ENCODE measurements at regions of chr7 and their contacts with region 1.

Region 1: GRCh38 chr7:44477063-44477830 is 13.2 kb downstream of the NUDCD3 start:
- DNase-seq: peak in 4 of 5 donors; percentile 38 to 62 (median 41)
- ATAC-seq: peak; percentile 86 to 89 (median 88)
- H3K4me3 ChIP-seq: no peak overlapping the region
- H3K27ac ChIP-seq: peak overlapping the region in 11 of 12 donors; percentile 19 to 68 (median 39)
- H3K4me1 ChIP-seq: peaks cover 6 to 62% (median 23%) of the 10 kb centered on the region in 12 donors
- H3K27me3 ChIP-seq: no peaks in the 10 kb centered on the region
- CTCF ChIP-seq: peak; percentile 77 to 94 (median 89)
- POLR2A ChIP-seq: no peak

Region 2: DNA sequence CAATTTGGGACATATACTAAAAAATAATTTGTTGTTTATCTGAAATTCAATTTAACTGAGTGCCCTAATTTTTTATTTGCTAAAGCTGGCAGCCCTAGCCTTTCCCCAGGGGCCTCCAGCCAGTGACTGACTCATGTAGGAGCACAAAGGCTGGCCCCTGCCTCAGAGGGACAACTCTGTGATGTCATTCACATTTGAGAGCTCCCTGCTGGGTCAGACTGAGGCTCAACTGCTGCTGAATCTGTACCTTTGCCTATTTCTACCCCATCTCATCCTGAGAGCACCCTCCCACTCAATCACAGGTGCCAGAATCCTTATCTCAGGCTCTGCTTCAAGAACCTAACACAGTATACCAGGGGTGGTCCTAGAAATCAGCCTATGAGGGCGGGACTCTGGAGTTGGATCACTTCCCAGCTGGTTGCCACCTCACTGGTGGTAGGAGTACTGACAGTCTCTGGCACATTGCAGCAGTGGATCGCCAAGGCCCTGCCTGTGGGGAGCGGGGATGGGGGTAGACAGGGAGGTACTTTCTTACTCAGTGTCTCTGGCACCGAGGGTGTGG is 299.6 kb before region 1 on chr7:
- intact Hi-C with region 1: no loop called
- DNase-seq: peak in 1 of 5 donors; percentile 57
- ATAC-seq: peak; percentile 54 to 85 (median 72)
- H3K4me3 ChIP-seq: no peak overlapping the region
- H3K27ac ChIP-seq: peak overlapping the region in 1 of 12 donors; percentile 7
- H3K4me1 ChIP-seq: peaks cover 0 to 8% (median 0%) of the 10 kb centered on the region in 12 donors
- H3K27me3 ChIP-seq: peaks cover 0 to 11% (median 0%) of the 10 kb centered on the region in 9 donors
- CTCF ChIP-seq: no peak
- POLR2A ChIP-seq: no peak

Region 3: DNA sequence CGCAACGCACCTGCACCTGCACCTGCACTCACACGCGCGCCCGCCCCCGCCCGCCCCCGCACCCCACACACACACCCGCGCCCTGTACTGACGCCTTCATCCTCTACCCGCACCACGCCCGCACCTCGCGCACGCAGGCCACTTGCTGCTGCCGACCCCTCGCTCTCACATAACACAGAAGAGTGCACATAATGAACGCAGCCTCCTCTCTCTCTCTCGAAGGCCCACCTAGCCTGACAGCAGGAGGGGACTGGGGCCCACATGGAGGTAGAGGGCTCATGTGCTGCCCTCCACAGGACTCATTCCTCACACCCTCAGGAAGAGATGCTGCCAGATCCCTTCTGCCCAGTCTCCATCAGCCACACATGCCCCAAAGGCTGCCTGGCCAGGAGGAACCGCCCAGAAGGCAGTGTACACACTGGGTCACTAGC is 151.4 kb before region 1 on chr7:
- intact Hi-C with region 1: loop called in 2 of 10 experiments (anchors 5 to 10 kb)
- DNase-seq: no peak
- ATAC-seq: peak; percentile 20 to 34 (median 24)
- H3K4me3 ChIP-seq: peak overlapping the region in 9 of 12 donors; percentile 7 to 58 (median 37)
- H3K27ac ChIP-seq: peak overlapping the region in 2 of 12 donors; percentile 38 to 91
- H3K4me1 ChIP-seq: peaks cover 0 to 51% (median 7%) of the 10 kb centered on the region in 12 donors
- H3K27me3 ChIP-seq: peaks cover 0 to 25% (median 4%) of the 10 kb centered on the region in 9 donors
- CTCF ChIP-seq: peak in 2 of 12 donors; percentile 27 to 31
- POLR2A ChIP-seq: no peak

Region 4: GRCh38 chr7:44377681-44378421 is 99.4 kb before region 1 on chr7:
- intact Hi-C with region 1: loop called in 2 of 10 experiments (anchors 2 to 5 kb)
- DNase-seq: no peak
- ATAC-seq: no peak
- H3K4me3 ChIP-seq: no peak overlapping the region
- H3K27ac ChIP-seq: no peak overlapping the region
- H3K4me1 ChIP-seq: peaks cover 0 to 8% (median 2%) of the 10 kb centered on the region in 12 donors
- H3K27me3 ChIP-seq: no peaks in the 10 kb centered on the region
- CTCF ChIP-seq: no peak
- POLR2A ChIP-seq: no peak

Region 5: DNA sequence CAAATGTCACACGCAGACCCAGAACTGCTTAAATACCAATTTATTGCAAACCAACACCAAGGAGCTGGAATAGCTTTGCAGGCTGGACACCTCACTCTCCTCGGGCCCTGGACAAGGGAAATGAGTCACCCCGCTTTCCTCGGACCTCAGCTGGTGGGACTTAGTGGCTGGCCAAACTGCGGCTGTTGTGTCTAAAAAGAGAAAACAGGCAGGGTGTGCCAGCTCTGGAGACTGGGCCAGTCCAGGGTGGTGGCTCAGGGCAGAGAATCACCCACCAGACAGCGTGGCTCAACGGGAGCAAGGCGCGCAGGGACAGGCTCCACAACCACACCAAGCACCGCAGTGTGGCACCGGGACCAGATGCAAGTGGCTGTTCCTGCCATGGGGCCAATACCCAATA is 93.7 kb before region 1 on chr7:
- intact Hi-C with region 1: loop called in 1 of 10 experiments (anchors 5 kb)
- DNase-seq: peak in 2 of 5 donors; percentile 8 to 46
- ATAC-seq: peak in 3 of 4 donors; percentile 8 to 50 (median 15)
- H3K4me3 ChIP-seq: no peak overlapping the region
- H3K27ac ChIP-seq: no peak overlapping the region
- H3K4me1 ChIP-seq: peaks cover 0 to 30% (median 14%) of the 10 kb centered on the region in 12 donors
- H3K27me3 ChIP-seq: no peaks in the 10 kb centered on the region
- CTCF ChIP-seq: no peak
- POLR2A ChIP-seq: no peak

Region 6: GRCh38 chr7:44712012-44712411 is 234.8 kb after region 1 on chr7:
- intact Hi-C with region 1: no loop called
- DNase-seq: no peak
- ATAC-seq: peak in 1 of 4 donors; percentile 1
- H3K4me3 ChIP-seq: no peak overlapping the region
- H3K27ac ChIP-seq: peak overlapping the region in 4 of 12 donors; percentile 9 to 56 (median 34)
- H3K4me1 ChIP-seq: peaks cover 0 to 25% (median 0%) of the 10 kb centered on the region in 12 donors
- H3K27me3 ChIP-seq: no peaks in the 10 kb centered on the region
- CTCF ChIP-seq: no peak
- POLR2A ChIP-seq: no peak

Measured in heart left ventricle (tissue), 16 donors.